ENCODE measurements at regions of chr2 and their contacts with region 1.

Region 1: DNA sequence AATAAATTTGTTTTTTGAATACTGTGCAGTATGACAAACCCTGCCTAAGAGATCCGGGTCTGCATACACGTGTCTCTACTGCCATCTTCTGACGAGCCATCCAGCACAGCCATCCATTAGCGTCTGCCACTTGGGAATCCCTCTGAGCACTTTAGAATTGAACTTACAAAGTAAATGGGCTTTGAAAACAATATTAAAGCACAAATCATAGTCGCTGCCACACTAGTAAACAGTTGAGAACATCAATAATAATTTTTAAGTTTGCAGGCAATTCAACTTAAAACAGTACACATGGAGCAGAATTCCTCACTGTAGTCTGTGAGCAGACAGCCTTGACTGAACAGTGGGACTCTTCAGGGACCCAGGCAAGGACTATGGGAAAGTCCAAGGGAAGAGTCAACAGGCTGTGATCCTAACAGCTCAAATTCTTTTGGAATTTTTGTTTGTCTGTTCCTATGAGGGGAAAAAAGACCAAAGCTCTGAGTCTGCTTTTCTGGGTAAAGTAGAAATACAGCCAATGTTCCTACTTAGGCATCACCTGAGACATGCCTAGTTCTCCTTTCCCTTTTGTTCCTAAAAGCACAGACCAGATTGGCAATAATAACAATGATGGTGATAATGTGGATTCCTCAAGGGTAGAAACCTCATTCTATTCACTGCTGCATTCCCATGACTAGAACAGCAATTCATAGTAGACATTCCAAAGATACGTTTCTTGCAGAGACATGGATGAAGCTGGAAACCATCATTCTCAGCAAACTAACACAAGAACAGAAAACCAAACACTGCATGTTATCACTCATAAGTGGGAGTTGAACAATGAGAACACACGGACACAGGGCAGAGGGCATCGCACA is 92.9 kb downstream of the MREG start:
- DNase-seq: peak; percentile 38 to 95 (median 74)

Region 2: GRCh38 chr2:215454519-215455246 is 465.8 kb before region 1 on chr2:
- intact Hi-C with region 1: loop called (anchors 1 kb)
- DNase-seq: no peak